Activated CD4-positive, alpha-beta memory T cell treated with anti-CD3 and anti-CD28 coated beads for 36 hours (primary cell): ENCODE measurements at regions of chr1 and their contacts with region 1.

Region 1: GRCh38 chr1:26744075-26744959 is 43.4 kb upstream of the PIGV start:
- DNase-seq: peak; percentile 91
- H3K4me3 Mint-ChIP-seq: peak overlapping the region; percentile 48
- H3K27ac Mint-ChIP-seq: peak overlapping the region; percentile 92
- H3K4me1 Mint-ChIP-seq: peaks cover 83% of the 10 kb centered on the region
- H3K27me3 Mint-ChIP-seq: no peaks in the 10 kb centered on the region

Region 2: GRCh38 chr1:26582836-26583460 is 161.4 kb before region 1 on chr1:
- CTCF ChIA-PET with region 1: interaction called, 4 read pairs
- POLR2A ChIA-PET with region 1: no interaction called
- intact Hi-C with region 1: loop called (anchors 2 kb)
- DNase-seq: peak; percentile 94
- H3K4me3 Mint-ChIP-seq: no peak overlapping the region
- H3K27ac Mint-ChIP-seq: peak overlapping the region; percentile 73
- H3K4me1 Mint-ChIP-seq: peaks cover 47% of the 10 kb centered on the region
- H3K27me3 Mint-ChIP-seq: no peaks in the 10 kb centered on the region

Region 3: DNA sequence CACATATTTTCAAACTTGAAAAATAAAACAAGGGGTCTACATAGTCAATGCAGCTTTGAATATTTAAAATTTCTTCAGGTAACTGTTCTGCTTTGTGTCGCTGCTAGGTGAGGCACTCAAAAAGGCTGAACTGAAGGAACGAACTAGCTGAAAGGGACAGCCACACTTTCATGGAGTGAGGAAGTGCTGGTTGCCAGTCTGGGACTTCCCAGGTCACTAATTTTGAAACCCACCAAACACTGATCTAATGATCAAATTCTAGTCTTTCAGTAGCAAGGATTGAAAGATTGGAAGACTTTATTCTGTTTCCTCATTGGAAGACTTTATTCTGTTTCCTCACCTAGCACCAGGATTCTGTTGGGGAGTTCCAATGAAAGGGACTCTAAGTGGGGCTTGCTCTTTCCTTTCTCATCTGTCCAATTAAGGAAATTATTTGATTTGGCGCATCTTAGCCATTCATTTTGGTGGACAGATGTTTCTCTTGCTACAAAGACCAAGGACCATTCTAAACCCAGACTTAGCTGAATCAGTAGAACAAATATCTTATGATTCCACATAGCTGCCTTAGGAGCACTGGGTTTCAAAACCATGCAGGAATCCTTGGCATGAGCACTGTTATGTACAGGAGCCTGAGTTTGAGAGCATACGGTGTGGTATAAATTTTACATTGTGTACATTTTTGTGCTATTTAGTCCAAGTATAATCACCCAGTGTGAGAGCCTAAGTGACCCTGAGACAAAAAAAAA is 59.4 kb before region 1 on chr1:
- CTCF ChIA-PET with region 1: no interaction called
- POLR2A ChIA-PET with region 1: no interaction called
- intact Hi-C with region 1: no loop called
- DNase-seq: no peak
- H3K4me3 Mint-ChIP-seq: no peak overlapping the region
- H3K27ac Mint-ChIP-seq: no peak overlapping the region
- H3K4me1 Mint-ChIP-seq: peaks cover 18% of the 10 kb centered on the region
- H3K27me3 Mint-ChIP-seq: no peaks in the 10 kb centered on the region

Region 4: GRCh38 chr1:26723013-26723991 is 21.0 kb before region 1 on chr1:
- CTCF ChIA-PET with region 1: interaction called, 13 read pairs
- POLR2A ChIA-PET with region 1: interaction called, 19 read pairs
- intact Hi-C with region 1: loop called (anchors 1 kb)
- DNase-seq: peak; percentile 61
- H3K4me3 Mint-ChIP-seq: no peak overlapping the region
- H3K27ac Mint-ChIP-seq: peak overlapping the region; percentile 70
- H3K4me1 Mint-ChIP-seq: peaks cover 89% of the 10 kb centered on the region
- H3K27me3 Mint-ChIP-seq: no peaks in the 10 kb centered on the region

Region 5: DNA sequence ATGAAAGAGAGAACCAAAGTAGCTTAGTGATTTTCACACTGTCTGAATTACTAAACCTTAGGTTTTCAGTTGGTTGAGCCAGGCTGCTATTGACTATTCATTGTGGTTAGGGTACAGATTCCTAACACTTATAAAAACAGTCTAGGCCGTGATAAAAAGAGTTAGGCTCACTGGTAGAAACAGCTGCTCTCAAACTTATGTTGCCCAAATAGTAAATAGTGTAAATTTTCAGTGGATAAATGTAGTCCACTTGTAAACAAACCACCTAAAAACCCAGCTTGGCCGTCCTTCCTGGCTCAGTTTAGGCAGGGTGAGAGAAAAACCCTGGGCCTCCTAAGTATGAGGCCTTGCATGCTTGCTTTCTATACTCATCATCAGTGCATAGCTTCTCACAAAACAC is 13.6 kb before region 1 on chr1:
- CTCF ChIA-PET with region 1: interaction called, 13 read pairs
- POLR2A ChIA-PET with region 1: interaction called, 19 read pairs
- intact Hi-C with region 1: no loop called
- DNase-seq: no peak
- H3K4me3 Mint-ChIP-seq: no peak overlapping the region
- H3K27ac Mint-ChIP-seq: peak overlapping the region; percentile 69
- H3K4me1 Mint-ChIP-seq: peaks cover 91% of the 10 kb centered on the region
- H3K27me3 Mint-ChIP-seq: no peaks in the 10 kb centered on the region